ENCODE measurements at regions of chrX and their contacts with region 1.

Region 1: DNA sequence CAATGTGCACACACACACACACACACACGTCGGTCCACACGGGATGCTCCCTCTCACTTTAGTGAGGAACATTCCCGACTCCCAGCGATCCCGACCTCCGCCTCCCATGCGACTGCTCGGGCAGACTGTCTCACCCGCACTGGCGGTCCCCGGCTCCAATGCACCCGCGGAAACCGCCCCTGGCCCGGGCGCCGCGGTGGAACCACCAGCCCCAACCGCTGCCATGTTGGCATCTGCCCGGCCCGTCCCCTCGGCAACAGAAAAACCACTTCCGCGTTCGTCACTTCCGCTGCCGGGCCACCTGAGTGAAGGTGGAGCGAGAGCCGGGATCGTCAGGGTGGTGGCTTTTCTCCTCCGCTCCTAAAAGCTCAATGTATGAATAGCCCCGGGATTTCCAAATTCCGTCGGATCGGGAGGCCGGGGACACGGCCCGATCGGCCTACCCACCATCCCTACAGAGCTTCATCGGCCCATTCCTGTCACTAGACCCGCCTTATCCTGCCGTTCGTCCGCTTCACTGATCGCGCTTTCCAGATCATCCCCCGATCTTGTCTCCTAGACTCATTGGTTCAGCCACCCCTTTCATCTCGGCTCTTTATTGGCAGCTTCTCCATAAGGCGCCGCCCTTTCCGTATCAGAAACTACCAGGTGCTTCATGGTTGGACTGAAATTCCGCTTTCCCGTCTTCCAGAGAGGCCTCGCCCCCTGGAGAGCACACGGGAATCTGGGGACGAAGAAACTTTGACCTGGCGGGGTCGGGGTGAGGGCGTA is at the start of gene SLC35A2:
- DNase-seq: peak; percentile 72 to 94 (median 90)
- ATAC-seq: peak; percentile 79 to 80
- H3K4me3 Mint-ChIP-seq: peak within 1 kb of the TSS; percentile 89 to 97 (median 94)
- H3K27ac Mint-ChIP-seq: peak within 1 kb of the TSS; percentile 88 to 98 (median 96)
- H3K4me1 Mint-ChIP-seq: peaks cover 16 to 59% (median 47%) of the 10 kb centered on the region in 4 donors
- H3K27me3 Mint-ChIP-seq: no peaks in the 10 kb centered on the region
- polyA plus RNA-seq, gene SLC35A2: 6.8 to 8.1 (median 7.3) TPM

Region 2: DNA sequence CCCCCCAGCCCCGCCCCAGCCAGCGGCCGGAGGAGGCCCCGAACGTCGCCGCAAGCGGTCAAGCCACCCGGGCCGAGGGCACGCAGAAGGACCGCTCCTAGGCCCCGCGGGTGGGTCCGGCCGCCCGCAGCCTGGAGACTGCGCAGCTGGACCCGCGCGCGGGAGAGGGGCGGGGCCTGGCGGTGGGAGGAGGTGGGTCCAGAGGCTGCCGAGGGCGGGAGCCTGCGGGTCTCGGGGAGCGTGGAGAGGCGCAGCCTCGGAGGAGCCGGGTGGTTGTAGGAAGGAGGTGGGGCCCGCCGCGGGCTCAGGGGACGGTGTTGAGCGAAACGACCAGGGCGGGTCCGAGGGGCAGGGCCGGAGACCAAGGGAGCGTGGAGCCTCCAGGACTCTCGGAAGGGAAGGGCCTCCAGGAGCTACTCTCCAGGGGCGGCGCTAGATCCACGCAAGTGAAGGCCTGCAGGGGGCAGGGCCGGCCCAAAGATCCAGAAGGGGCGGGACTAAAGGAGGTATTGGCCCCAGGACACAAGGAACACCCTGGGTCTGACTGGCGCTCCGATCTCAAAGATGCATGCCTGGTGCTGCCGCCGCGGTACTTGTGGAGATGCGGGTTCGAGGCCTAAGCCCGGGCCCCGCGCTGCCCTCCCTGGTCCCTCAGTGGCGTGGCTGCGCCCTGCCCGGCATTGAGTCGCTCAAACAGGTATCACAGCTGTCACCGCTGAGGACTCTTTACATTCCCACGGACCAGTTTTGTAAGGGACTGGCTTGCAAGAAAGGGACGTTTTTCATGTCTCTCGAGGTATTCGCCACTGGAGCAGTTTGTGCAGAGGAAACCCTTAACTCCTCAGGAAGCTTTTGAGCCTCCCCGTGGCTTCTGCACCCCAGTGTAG is 20.0 kb before region 1 on chrX:
- POLR2A ChIA-PET with region 1: interaction called, 14 read pairs
- DNase-seq: peak; percentile 53 to 84 (median 72)
- ATAC-seq: peak; percentile 88 to 90
- H3K4me3 Mint-ChIP-seq: peak overlapping the region; percentile 60 to 95 (median 82)
- H3K27ac Mint-ChIP-seq: peak overlapping the region in 7 of 10 donors; percentile 69 to 94 (median 85)
- H3K4me1 Mint-ChIP-seq: peaks cover 9 to 32% (median 23%) of the 10 kb centered on the region in 4 donors
- H3K27me3 Mint-ChIP-seq: no peaks in the 10 kb centered on the region

Measured in naive thymus-derived CD8-positive, alpha-beta T cell (primary cell).